ENCODE measurements at regions of chr17 and their contacts with region 1.

Region 1: GRCh38 chr17:28053044-28053670 is 10.7 kb downstream of the NLK start:
- DNase-seq: no peak
- H3K4me3 ChIP-seq: no peak overlapping the region
- H3K27ac ChIP-seq: no peak overlapping the region
- H3K4me1 ChIP-seq: peaks cover 28% of the 10 kb centered on the region
- CTCF ChIP-seq: no peak

Region 2: DNA sequence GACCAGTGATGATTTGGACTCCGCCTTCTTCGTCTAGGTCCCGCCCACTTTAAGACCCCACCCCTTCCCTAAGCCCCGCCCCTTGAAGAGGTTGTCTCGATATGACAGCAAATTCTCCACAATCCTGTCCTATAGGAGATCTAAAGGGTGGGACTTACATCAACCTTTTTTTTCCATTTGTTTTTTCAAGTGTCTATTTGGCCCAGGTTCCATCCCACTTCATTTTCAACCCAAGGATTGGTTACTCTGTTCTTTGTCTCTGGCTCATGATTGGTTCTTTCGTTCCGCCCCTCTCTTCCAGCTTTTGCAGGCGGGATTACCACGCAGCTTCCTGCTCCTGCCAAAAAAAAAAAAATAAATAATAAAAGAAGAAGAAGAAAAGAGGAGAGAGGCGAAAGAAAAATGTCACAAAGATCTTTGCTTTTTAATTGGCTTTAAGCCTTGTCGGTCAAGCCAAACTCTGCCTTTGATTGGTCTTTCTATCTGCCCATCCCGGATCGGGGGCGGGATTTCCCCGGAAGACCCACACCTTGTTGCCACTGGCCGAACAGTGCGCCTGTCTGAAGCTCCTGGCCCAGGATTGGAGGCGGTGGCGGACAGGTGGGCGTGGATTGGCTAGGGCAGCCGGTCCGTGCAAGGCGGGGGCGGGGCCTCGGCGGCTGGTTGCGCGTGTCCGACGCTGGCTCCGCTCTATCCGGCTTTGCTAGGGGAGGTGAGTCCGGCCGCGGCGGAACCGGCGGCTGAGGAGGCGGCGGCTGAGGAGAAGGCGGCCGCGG is 11.9 kb before region 1 on chr17:
- CTCF ChIA-PET with region 1: interaction called, 3 read pairs
- POLR2A ChIA-PET with region 1: interaction called, 13 read pairs
- intact Hi-C with region 1: no loop called
- DNase-seq: peak; percentile 99
- H3K4me3 ChIP-seq: peak overlapping the region; percentile 87
- H3K27ac ChIP-seq: peak overlapping the region; percentile 65
- H3K4me1 ChIP-seq: peaks cover 48% of the 10 kb centered on the region
- CTCF ChIP-seq: no peak

Measured in OCI-LY7 (cell line).